ENCODE measurements at regions of chr9 and their contacts with region 1.

Region 1: DNA sequence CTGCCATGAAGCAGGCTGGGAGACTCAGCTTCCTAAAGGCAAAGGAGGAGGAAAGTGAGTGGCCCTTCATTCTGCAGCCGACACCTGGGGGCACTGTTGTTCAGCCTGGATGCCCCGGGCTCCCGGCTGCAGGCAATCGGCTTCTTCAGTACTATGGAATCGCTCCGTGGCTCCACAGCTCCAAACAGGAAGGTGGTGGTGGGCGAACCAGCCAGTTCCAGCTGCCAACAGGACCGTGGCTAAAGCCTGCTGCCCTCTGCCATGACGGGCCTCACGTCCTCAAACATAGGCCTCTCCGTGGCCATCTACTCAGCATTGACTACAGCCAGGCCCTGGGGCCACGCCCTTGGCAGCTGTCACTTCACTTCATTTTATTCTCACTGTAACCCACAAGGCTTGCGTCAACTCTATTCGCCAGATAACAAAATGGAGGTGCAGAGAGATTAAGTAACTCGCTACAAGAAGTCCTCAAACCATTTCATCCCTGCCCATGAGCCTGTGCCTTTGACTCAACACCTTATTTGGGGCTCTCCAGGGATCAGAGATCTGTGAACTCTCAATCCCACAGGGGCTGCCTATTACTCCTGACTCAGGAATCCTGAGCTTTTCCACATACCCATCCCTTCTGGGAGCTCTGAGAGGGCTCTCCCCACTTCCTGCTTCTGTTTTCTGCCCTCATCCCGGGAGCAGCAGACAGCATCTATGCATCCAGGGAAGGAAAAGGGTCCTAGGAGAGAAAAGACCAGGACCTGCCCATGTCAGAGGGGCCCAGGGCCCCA is 38.0 kb downstream of the PAX5 start:
- DNase-seq: peak; percentile 53
- ATAC-seq: peak; percentile 97
- H3K4me3 ChIP-seq: no peak overlapping the region
- H3K27ac ChIP-seq: no peak overlapping the region
- H3K4me1 ChIP-seq: no peaks in the 10 kb centered on the region
- H3K27me3 ChIP-seq: peaks cover 48% of the 10 kb centered on the region
- CTCF ChIP-seq: peak; percentile 79
- POLR2A ChIP-seq: no peak
- RAD21 ChIP-seq: peak; percentile 85

Region 2: DNA sequence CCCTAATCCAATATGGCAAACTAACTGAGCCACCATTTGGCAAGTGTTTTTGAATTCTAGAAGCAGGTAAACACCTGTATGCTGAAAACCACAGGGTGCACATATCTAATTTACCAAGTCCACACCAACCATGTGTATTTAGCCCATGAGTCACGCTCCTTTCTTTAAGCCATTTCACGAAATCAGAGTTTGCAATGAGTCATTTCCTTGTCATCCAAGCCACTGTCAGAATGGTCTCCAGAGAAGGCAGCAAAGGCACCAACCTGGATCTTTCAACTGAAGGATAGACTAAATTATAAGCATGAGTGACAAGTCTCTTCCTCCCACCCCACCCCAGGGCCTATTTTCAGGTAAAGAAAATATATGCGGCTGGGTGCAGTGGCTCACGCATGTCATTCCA is 72.0 kb before region 1 on chr9:
- CTCF ChIA-PET with region 1: no interaction called
- POLR2A ChIA-PET with region 1: no interaction called
- dilution Hi-C with region 1: no loop called
- in situ Hi-C with region 1: no loop called
- intact Hi-C with region 1: no loop called
- DNase-seq: peak; percentile 81
- ATAC-seq: peak; percentile 89
- H3K4me3 ChIP-seq: no peak overlapping the region
- H3K27ac ChIP-seq: no peak overlapping the region
- H3K4me1 ChIP-seq: no peaks in the 10 kb centered on the region
- H3K27me3 ChIP-seq: peaks cover 9% of the 10 kb centered on the region
- CTCF ChIP-seq: no peak
- POLR2A ChIP-seq: no peak
- RAD21 ChIP-seq: no peak

Region 3: GRCh38 chr9:37156781-37157356 is 160.8 kb after region 1 on chr9:
- CTCF ChIA-PET with region 1: no interaction called
- POLR2A ChIA-PET with region 1: no interaction called
- dilution Hi-C with region 1: no loop called
- in situ Hi-C with region 1: no loop called
- intact Hi-C with region 1: no loop called
- DNase-seq: peak; percentile 38
- ATAC-seq: no peak
- H3K4me3 ChIP-seq: no peak overlapping the region
- H3K27ac ChIP-seq: no peak overlapping the region
- H3K4me1 ChIP-seq: no peaks in the 10 kb centered on the region
- H3K27me3 ChIP-seq: no peaks in the 10 kb centered on the region
- CTCF ChIP-seq: no peak
- POLR2A ChIP-seq: no peak
- RAD21 ChIP-seq: no peak

Region 4: DNA sequence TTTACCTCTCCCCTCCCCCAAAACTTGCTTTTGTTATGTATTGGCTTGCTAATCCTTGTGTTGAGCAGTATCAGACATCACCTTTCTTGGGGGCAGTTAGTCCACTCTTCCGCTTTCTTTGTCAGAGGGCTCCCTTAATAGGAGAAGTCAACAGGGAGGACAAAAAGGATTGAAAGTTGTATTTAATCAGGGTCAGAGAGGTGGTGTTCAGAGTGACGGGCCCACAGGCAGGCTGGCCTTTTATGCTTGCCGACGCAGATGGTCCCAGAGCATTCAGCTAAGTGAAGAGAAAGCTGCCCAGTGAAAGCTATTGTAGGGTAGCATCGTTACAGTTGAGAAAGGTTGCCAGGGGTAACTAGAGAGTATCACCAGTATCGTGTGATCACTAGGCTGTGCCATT is 255.3 kb after region 1 on chr9:
- CTCF ChIA-PET with region 1: no interaction called
- POLR2A ChIA-PET with region 1: no interaction called
- dilution Hi-C with region 1: no loop called
- in situ Hi-C with region 1: no loop called
- intact Hi-C with region 1: loop called (anchors 5 kb)
- DNase-seq: no peak
- ATAC-seq: no peak
- H3K4me3 ChIP-seq: no peak overlapping the region
- H3K27ac ChIP-seq: no peak overlapping the region
- H3K4me1 ChIP-seq: no peaks in the 10 kb centered on the region
- H3K27me3 ChIP-seq: no peaks in the 10 kb centered on the region
- CTCF ChIP-seq: no peak
- POLR2A ChIP-seq: no peak
- RAD21 ChIP-seq: no peak

Region 5: DNA sequence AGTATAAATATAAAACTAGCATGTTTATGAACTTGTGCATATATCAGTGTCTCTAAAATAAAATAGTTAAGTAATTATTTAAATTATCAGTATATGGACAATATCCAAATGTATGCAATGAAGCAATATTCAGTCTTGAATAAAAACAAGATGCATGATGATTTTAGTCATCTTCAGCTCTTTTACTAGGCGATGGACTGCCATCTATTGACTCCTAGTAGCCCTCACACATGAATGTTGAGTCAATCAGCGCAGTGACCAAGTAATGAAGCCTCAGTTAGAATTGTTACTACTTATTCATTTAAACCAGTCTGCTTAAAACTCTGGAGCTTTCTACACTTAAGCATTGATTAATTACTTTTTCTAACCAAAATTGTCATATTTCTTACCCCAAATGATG is 333.5 kb after region 1 on chr9:
- CTCF ChIA-PET with region 1: no interaction called
- POLR2A ChIA-PET with region 1: no interaction called
- dilution Hi-C with region 1: no loop called
- in situ Hi-C with region 1: loop called (anchors 10 kb)
- intact Hi-C with region 1: loop called (anchors 5 kb)
- DNase-seq: peak; percentile 50
- ATAC-seq: peak; percentile 40; the same call in 1 of the 2 replicates
- H3K4me3 ChIP-seq: no peak overlapping the region
- H3K27ac ChIP-seq: no peak overlapping the region
- H3K4me1 ChIP-seq: no peaks in the 10 kb centered on the region
- H3K27me3 ChIP-seq: no peaks in the 10 kb centered on the region
- CTCF ChIP-seq: peak; percentile 46
- POLR2A ChIP-seq: no peak
- RAD21 ChIP-seq: peak; percentile 62

Region 6: DNA sequence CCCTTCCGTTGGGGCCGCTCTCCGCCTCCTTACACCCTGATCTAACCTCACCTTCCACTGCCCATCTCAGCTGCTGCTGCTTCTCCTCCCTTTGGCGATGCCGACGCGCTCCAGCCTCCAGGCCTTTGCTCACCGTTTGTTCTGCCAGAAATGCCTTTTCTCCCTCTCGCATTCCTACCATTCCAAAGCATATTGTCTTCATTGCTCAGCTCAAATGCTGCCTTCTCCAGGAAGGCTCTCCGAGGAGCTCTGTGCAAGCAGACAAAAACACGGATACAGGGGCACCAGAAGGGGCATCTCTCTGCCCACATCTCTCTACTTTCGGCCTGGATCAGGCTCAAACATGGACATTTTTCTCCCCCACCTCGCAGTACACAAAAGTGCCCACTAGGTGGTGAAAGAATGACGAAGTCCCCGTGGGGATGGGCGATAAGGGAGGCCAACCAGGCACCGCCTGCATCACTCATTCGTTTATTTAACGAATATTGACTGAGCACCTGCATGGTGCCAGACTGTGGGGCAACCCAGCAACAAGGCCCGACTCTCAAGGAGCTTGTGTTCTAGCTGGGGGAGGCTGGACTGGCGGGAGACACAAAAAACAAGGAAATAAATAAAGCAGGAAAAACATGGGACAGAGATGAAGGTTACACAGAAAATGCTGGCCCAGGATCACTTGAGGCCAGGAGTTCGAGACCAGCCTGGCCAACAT is 419.0 kb after region 1 on chr9:
- CTCF ChIA-PET with region 1: no interaction called
- POLR2A ChIA-PET with region 1: no interaction called
- dilution Hi-C with region 1: no loop called
- in situ Hi-C with region 1: no loop called
- intact Hi-C with region 1: loop called (anchors 1 kb)
- DNase-seq: peak; percentile 73
- ATAC-seq: peak; percentile 85
- H3K4me3 ChIP-seq: no peak overlapping the region
- H3K27ac ChIP-seq: peak overlapping the region; percentile 2; the same call in 1 of the 2 replicates
- H3K4me1 ChIP-seq: peaks cover 2% of the 10 kb centered on the region; the same call in 1 of the 2 replicates
- H3K27me3 ChIP-seq: no peaks in the 10 kb centered on the region
- CTCF ChIP-seq: peak; percentile 76
- POLR2A ChIP-seq: no peak
- RAD21 ChIP-seq: peak; percentile 57

Measured in IMR-90 (cell line).